ENCODE measurements at regions of chr14 and their contacts with region 1.

Region 1: DNA sequence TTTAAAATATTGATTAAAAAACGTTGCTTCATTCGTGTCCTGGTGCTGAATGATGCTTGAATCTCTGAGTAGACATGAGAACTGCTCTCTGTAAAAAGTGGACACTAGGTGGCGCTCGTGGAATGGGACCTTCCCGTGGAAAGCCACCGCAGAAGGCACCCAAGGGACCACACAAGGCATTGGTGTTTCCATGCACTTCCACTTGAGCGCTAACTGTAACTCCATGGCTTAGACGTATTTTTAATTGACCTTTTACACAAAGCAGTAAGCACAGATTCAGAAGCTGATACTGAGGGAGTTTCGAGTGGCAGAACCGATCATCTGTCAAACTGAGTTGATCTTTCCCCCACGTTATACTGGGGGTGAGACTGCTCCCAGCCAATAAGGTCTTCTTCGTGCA is 135.3 kb downstream of the PRKCH start:
- DNase-seq: peak; percentile 88
- H3K4me3 ChIP-seq: no peak overlapping the region
- H3K27ac ChIP-seq: no peak overlapping the region
- H3K4me1 ChIP-seq: no peaks in the 10 kb centered on the region
- H3K27me3 ChIP-seq: no peaks in the 10 kb centered on the region
- CTCF ChIP-seq: peak; percentile 78 to 87 (median 83)
- POLR2A ChIP-seq: no peak

Region 2: DNA sequence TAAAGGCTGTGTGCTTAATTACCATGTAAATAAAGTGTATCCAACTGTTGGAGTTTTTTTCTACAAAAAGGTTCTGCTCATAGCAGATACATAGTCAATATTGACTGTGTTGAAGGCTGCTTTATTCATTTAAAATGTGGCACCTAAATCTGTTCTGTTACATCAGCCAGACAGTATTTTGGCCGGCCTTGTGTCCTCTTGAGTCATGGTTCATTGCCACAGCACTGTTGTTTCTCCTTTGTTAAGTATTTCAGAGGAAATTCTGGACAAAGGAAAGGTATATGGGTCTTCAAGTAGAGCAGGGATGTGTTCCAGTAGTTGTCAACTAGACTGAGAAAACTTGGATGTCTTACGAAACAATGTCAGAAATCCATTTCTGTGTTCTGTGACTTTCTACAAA is 380.2 kb before region 1 on chr14:
- intact Hi-C with region 1: no loop called
- DNase-seq: no peak
- H3K4me3 ChIP-seq: no peak overlapping the region
- H3K27ac ChIP-seq: no peak overlapping the region
- H3K4me1 ChIP-seq: no peaks in the 10 kb centered on the region
- H3K27me3 ChIP-seq: no peaks in the 10 kb centered on the region
- CTCF ChIP-seq: no peak
- POLR2A ChIP-seq: no peak

Region 3: DNA sequence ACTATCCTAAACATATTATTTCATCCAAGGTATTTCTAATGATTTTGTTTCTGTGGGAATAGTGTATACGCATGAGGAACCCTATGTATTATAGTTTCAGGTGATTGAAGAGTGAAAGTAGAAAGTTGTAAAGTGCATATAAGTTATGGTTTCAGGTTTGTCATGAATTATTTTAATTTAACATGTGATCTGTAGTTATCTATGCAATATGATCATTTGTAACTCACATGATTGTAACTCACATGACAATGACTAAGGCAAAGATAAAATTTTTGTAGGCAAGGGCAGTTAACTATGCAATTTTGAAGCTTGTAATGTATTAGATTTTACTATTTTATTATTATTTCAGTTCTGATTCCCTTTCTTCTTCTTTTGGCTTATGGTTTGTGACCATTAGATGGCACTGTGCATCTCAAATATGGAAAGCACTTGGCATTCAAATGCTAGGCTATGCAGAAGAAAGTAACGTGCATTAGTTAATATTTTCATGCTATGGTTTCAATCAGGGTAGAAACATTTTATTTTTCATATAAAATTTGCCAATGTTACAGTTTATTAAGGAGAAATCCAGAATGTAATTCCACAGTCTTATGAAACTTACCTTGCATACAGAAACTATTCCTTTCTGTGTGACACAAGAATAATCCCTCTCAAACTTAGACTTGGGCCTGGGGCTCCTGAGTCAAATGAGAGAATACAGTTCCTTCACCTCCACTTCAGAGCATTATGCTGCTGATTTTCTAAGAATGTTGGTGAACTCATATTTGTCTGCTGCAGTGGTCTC is 159.8 kb before region 1 on chr14:
- intact Hi-C with region 1: loop called (anchors 5 kb)
- DNase-seq: no peak
- H3K4me3 ChIP-seq: no peak overlapping the region
- H3K27ac ChIP-seq: no peak overlapping the region
- H3K4me1 ChIP-seq: no peaks in the 10 kb centered on the region
- H3K27me3 ChIP-seq: no peaks in the 10 kb centered on the region
- CTCF ChIP-seq: peak in 3 of 4 experiments; percentile 59 to 80 (median 76)
- POLR2A ChIP-seq: no peak

Region 4: DNA sequence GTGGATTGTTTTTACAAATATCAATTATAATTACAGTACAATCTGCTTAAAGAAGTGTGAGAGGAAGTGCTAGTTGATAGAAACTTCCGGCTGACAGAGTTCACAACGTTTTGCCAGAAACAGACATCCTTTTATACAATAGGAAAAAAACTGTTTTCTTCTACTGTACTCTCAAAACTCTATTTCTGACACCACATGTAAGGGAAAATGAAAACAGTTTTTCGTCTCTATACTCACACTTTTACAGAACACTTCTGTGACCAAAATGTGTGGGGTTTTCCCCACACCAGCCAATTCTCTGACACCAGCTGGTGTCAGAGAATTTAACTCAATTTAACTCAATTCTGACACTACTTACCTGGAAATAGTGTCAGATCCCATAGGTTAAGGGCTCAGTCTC is 214.4 kb after region 1 on chr14:
- intact Hi-C with region 1: no loop called
- DNase-seq: no peak
- H3K4me3 ChIP-seq: no peak overlapping the region
- H3K27ac ChIP-seq: no peak overlapping the region
- H3K4me1 ChIP-seq: no peaks in the 10 kb centered on the region
- H3K27me3 ChIP-seq: no peaks in the 10 kb centered on the region
- CTCF ChIP-seq: no peak
- POLR2A ChIP-seq: no peak